B cell (primary cell): ENCODE measurements at regions of chr17 and their contacts with region 1.

Region 1: DNA sequence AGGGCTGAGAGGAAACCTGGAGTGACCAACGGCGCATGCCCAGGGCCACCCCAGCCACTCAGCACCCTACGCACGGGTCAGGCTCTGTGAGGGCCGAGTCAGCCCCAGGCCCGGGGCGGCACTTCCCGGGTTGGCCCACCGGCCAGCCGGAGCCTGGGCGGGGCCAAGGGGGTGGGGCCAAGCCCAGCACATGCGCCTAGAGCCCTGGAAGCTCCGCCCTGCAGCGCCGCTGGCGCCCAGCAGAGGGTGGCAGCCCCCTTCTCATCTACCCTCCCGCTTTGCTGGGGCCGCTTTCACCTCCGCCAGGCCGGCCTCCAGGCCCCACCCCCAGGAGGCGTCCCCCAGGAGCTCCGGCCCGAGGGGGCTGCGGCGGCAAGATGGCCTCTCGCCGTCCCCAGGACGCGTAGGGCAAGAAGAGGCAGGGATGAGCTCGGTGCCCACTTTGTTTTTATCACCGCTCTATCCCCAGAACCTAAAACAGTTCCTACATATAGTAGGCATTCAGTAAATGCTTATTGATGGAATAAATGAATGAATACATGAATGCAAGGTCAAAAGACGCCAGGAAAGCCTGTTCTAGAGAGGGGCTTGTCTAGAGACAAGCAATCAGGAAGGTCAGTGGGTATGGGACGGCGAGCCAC is 31.3 kb downstream of the MYO18A start:
- DNase-seq: peak; percentile 96
- ATAC-seq: peak; percentile 96
- H3K4me3 ChIP-seq: peak overlapping the region; percentile 23 to 65 (median 49)
- H3K4me3 Mint-ChIP-seq: peak overlapping the region; percentile 88
- H3K27ac ChIP-seq: peak overlapping the region; percentile 85 to 88
- H3K27ac Mint-ChIP-seq: peak overlapping the region; percentile 93
- H3K4me1 ChIP-seq: peaks cover 34 to 39% of the 10 kb centered on the region in 2 donors
- H3K4me1 Mint-ChIP-seq: peaks cover 46% of the 10 kb centered on the region
- H3K27me3 ChIP-seq: no peaks in the 10 kb centered on the region
- H3K27me3 Mint-ChIP-seq: no peaks in the 10 kb centered on the region
- CTCF ChIP-seq: peak; percentile 96

Region 2: GRCh38 chr17:28710861-28711722 is 437.8 kb before region 1 on chr17:
- CTCF ChIA-PET with region 1: no interaction called
- POLR2A ChIA-PET with region 1: no interaction called
- intact Hi-C with region 1: loop called (anchors 10 kb)
- DNase-seq: peak; percentile 88
- ATAC-seq: peak; percentile 90
- H3K4me3 ChIP-seq: peak overlapping the region; percentile 54 to 88 (median 73)
- H3K4me3 Mint-ChIP-seq: peak overlapping the region; percentile 96
- H3K27ac ChIP-seq: peak overlapping the region; percentile 69 to 79
- H3K27ac Mint-ChIP-seq: peak overlapping the region; percentile 93
- H3K4me1 ChIP-seq: peaks cover 9 to 18% of the 10 kb centered on the region in 2 donors
- H3K4me1 Mint-ChIP-seq: peaks cover 19% of the 10 kb centered on the region
- H3K27me3 ChIP-seq: no peaks in the 10 kb centered on the region
- H3K27me3 Mint-ChIP-seq: no peaks in the 10 kb centered on the region
- CTCF ChIP-seq: no peak

Region 3: GRCh38 chr17:29059281-29059680 is 89.6 kb before region 1 on chr17:
- CTCF ChIA-PET with region 1: no interaction called
- POLR2A ChIA-PET with region 1: no interaction called
- intact Hi-C with region 1: no loop called
- DNase-seq: no peak
- ATAC-seq: no peak
- H3K4me3 ChIP-seq: no peak overlapping the region
- H3K4me3 Mint-ChIP-seq: no peak overlapping the region
- H3K27ac ChIP-seq: no peak overlapping the region
- H3K27ac Mint-ChIP-seq: no peak overlapping the region
- H3K4me1 ChIP-seq: no peaks in the 10 kb centered on the region
- H3K4me1 Mint-ChIP-seq: no peaks in the 10 kb centered on the region
- H3K27me3 ChIP-seq: no peaks in the 10 kb centered on the region
- H3K27me3 Mint-ChIP-seq: no peaks in the 10 kb centered on the region
- CTCF ChIP-seq: no peak

Region 4: DNA sequence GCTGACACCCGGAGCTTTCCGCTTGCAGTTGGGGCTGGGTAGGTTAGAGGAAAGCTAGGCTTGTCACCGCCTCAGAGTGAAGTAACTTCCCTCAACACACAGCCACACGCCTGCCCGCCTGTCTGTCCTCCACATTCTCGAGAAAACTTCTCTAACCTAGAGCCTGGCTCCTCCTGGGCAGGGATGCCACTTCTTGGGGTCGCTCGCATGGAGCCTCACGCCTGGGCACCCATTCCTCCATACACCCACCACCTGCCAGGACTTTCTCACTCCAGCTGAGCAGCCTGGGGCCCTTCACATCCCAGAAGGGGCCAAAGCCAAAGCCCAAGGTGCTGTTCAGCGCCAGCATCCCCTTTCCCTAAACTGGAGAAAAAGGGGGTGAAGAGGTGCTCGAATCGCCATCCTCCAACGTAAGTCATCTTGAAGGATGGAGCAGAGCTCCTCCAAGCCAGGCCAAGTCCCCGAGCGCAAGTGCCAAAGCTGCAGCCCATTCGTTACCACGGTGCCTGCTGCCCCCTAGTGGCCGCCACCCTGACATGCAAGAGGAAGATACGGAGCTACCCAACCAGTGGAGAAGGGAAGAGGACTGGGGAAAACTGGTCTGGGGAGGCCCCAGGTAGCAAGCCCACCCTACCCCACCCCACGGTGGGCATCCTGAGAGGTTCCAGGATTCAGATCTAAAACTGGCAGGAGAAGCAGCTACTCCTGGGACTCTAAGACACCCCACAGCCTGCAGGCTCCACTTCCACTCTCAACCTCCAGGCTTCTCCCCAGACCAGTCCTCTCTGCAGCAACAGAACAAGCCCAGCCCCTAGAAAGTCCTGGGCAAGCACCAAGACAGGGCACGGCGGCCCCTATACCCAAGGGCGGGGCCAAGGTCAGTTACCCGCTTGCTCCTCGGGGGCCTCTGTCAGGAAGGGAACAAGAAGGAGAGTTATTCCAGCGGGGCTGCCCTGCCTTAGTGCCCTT is 31.8 kb before region 1 on chr17:
- CTCF ChIA-PET with region 1: interaction called, 25 read pairs
- POLR2A ChIA-PET with region 1: no interaction called
- intact Hi-C with region 1: no loop called
- DNase-seq: peak; percentile 77
- ATAC-seq: peak; percentile 70
- H3K4me3 ChIP-seq: no peak overlapping the region
- H3K4me3 Mint-ChIP-seq: no peak overlapping the region
- H3K27ac ChIP-seq: no peak overlapping the region
- H3K27ac Mint-ChIP-seq: no peak overlapping the region
- H3K4me1 ChIP-seq: no peaks in the 10 kb centered on the region
- H3K4me1 Mint-ChIP-seq: peaks cover 5% of the 10 kb centered on the region
- H3K27me3 ChIP-seq: no peaks in the 10 kb centered on the region
- H3K27me3 Mint-ChIP-seq: no peaks in the 10 kb centered on the region
- CTCF ChIP-seq: peak; percentile 95

Region 5: DNA sequence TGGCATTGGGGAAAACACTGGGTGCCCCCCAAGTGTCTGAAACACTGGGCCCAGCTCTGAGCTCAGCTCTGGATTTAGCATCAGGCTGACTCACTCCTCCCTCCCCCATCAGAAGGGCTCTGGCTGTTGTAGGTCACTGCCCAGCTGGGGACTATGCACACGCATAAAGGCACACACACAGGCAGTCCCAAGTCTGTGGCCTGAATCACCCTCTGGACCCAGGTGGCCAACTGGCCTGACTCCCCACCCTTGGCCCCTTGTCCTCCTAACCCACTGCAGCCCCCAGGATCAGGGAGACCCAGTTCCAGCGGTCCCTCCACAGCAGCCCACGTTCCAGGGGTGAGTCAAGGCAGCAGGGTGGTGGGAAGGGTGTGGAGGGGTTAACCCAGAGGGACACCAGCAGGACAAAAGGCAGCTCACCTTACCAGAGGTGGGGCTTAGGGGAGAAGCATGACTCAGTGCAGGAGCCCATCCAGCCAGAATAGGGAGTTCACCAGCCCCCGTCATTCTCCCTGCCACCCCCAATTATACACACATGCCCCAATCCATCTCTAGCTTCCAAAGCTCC is 15.7 kb before region 1 on chr17:
- CTCF ChIA-PET with region 1: interaction called, 42 read pairs
- POLR2A ChIA-PET with region 1: no interaction called
- intact Hi-C with region 1: no loop called
- DNase-seq: no peak
- ATAC-seq: no peak
- H3K4me3 ChIP-seq: no peak overlapping the region
- H3K4me3 Mint-ChIP-seq: no peak overlapping the region
- H3K27ac ChIP-seq: no peak overlapping the region
- H3K27ac Mint-ChIP-seq: no peak overlapping the region
- H3K4me1 ChIP-seq: peaks cover 11 to 14% of the 10 kb centered on the region in 2 donors
- H3K4me1 Mint-ChIP-seq: peaks cover 35% of the 10 kb centered on the region
- H3K27me3 ChIP-seq: no peaks in the 10 kb centered on the region
- H3K27me3 Mint-ChIP-seq: no peaks in the 10 kb centered on the region
- CTCF ChIP-seq: no peak

Region 6: GRCh38 chr17:29195465-29196081 is 46.7 kb after region 1 on chr17:
- CTCF ChIA-PET with region 1: interaction called, 11 read pairs
- POLR2A ChIA-PET with region 1: interaction called, 3 read pairs
- intact Hi-C with region 1: loop called (anchors 1 kb)
- DNase-seq: peak; percentile 64
- ATAC-seq: peak; percentile 87
- H3K4me3 ChIP-seq: peak overlapping the region in 3 of 5 experiments; percentile 17 to 34 (median 25)
- H3K4me3 Mint-ChIP-seq: peak overlapping the region; percentile 64
- H3K27ac ChIP-seq: no peak overlapping the region
- H3K27ac Mint-ChIP-seq: peak overlapping the region; percentile 34
- H3K4me1 ChIP-seq: peaks cover 19 to 22% of the 10 kb centered on the region in 2 donors
- H3K4me1 Mint-ChIP-seq: peaks cover 23% of the 10 kb centered on the region
- H3K27me3 ChIP-seq: no peaks in the 10 kb centered on the region
- H3K27me3 Mint-ChIP-seq: no peaks in the 10 kb centered on the region
- CTCF ChIP-seq: no peak

Region 7: DNA sequence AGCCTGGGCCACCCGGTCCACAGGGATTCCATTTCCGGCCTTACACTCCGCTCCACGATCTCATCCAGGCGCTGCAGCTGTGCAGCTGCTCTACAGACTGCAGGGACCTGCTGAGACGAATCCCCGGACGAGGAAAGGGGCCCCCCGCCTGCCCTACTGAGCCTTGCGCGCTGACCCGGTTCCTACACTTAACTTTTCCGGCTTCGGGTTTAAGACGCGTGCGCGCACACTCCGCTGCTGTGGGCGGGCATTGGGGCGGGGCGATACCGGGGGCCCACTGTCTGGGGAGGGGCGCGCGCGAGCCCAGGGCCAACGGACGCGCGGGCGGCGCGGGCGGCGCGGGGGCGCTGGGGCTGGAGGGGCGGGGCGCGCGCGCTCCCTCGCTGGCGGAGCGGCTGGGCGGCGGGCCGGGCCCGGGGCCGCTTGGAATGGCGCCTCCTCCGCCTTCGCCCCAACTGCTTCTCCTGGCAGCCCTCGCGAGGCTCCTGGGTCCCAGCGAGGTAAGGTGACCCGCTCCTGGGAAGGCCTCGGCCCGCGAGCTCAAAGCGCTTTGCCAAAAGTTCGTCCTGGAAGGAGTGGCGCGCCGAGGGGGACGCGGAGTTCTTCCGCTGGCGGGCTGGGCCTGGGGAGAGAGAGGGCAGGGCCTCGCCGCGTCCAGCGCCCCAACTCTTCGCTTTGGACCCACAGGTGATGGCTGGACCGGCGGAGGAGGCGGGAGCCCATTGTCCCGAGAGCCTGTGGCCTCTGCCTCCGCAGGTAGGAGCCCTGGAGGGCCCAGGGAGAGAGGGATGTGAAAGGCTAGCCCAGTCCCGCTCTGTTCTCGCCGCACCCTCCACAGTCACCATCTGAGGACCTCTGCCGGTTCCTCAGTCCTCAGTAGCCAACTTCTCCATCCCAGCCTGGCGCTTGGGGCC is 419.7 kb after region 1 on chr17 and contains the start of gene TP53I13:
- CTCF ChIA-PET with region 1: no interaction called
- POLR2A ChIA-PET with region 1: no interaction called
- intact Hi-C with region 1: loop called (anchors 10 kb)
- DNase-seq: peak; percentile 92
- ATAC-seq: peak; percentile 60
- H3K4me3 ChIP-seq: peak within 1 kb of the TSS; percentile 71 to 99 (median 80)
- H3K4me3 Mint-ChIP-seq: peak within 1 kb of the TSS; percentile 99
- H3K27ac ChIP-seq: peak within 1 kb of the TSS; percentile 71 to 76
- H3K27ac Mint-ChIP-seq: peak within 1 kb of the TSS; percentile 97
- H3K4me1 ChIP-seq: peaks cover 27 to 40% of the 10 kb centered on the region in 2 donors
- H3K4me1 Mint-ChIP-seq: peaks cover 39% of the 10 kb centered on the region
- H3K27me3 ChIP-seq: no peaks in the 10 kb centered on the region
- H3K27me3 Mint-ChIP-seq: no peaks in the 10 kb centered on the region
- CTCF ChIP-seq: no peak
- total RNA-seq, gene TP53I13: 220 and 224 TPM in 2 replicates